Mammary epithelial cell (primary cell): ENCODE measurements at regions of chr4 and their contacts with region 1.

Region 1: DNA sequence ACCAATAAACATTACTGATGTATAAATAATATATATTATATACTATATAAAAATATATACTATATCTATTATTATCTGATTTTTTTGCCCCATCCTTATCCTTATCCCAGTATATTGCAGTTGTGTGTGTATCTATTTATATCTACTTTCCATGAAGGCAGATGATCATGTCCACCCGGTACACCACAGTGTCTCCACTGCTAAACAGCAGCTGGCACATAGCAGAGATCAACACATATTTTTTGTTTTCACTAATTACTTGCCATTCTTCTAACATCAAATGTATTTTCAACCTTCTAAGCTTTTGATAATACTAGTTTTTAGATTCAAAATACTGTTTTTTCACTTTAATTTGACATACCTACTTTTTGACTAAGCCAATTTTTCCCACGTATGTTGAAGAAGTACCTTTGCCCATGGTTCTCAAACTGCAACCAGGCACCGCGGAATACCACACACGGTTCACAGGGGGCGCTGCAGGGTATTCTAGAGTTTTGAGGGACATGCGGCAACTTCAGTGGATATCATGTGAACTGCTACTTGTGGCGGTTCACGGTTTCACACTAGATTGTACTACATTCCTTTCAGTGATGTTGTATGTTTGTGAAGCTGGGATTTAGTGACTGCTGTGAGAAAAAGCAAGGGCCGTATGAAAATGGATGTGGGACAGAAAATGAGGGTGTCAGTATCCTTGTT is 182.5 kb upstream of the NPY2R start:
- DNase-seq: peak; percentile 36
- H3K4me3 ChIP-seq: no peak overlapping the region
- H3K27ac ChIP-seq: no peak overlapping the region
- H3K4me1 ChIP-seq: no peaks in the 10 kb centered on the region
- H3K27me3 ChIP-seq: no peaks in the 10 kb centered on the region
- CTCF ChIP-seq: peak; percentile 43 to 64

Region 2: DNA sequence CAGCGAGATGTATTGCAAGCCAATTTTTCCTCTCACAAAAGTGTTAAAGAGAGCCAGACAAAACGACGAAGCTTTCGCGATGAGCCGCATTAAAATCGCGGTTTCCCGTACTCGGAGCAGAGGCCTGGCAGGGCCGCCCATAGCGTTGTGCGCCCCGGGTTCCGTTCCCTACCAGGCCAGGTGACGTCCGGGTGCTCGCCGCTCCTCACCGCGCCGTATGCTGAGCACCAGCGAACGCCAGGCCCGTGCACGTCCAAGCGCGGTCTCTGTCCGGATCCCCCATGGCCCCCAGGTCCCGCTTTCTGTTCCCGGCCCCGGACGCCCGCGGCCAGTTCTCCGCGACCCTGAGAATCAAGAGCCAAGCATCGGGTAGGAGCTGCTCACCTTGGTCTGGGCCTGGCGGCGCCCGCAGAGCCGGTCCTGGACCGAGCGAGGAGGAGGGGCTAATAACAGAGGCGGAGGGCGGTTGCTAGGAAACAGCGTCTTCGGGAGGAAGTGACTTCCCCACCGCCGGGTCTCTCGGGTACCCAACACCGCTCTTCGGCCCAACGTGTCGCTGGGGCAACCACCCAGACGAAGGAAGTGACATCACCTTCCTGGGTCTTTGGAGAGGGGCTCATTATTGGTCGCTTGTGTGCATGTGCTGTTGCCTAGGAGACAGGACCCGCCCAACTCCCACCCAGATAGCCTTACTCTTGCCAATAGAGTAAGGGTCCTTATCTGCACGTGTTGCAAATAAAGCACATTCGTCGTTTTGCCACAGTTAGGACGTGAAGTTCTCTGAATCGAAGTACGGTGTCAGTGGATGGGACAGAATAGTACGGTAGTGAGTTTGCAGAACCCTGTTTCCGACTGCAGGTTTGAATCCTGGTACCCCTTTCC is 350.7 kb after region 1 on chr4 and contains the start of gene MAP9:
- CTCF ChIA-PET with region 1: no interaction called
- dilution Hi-C with region 1: no loop called
- in situ Hi-C with region 1: no loop called
- intact Hi-C with region 1: loop called (anchors 10 kb)
- DNase-seq: peak; percentile 90
- H3K4me3 ChIP-seq: peak within 1 kb of the TSS; percentile 76 to 97 (median 87)
- H3K27ac ChIP-seq: peak within 1 kb of the TSS; percentile 73
- H3K4me1 ChIP-seq: peaks cover 5% of the 10 kb centered on the region
- H3K27me3 ChIP-seq: no peaks in the 10 kb centered on the region
- CTCF ChIP-seq: no peak
- total RNA-seq, gene MAP9: 20.0 to 21.8 TPM